CD4-positive, alpha-beta T cell (primary cell): ENCODE measurements at regions of chr9 and their contacts with region 1.

Region 1: DNA sequence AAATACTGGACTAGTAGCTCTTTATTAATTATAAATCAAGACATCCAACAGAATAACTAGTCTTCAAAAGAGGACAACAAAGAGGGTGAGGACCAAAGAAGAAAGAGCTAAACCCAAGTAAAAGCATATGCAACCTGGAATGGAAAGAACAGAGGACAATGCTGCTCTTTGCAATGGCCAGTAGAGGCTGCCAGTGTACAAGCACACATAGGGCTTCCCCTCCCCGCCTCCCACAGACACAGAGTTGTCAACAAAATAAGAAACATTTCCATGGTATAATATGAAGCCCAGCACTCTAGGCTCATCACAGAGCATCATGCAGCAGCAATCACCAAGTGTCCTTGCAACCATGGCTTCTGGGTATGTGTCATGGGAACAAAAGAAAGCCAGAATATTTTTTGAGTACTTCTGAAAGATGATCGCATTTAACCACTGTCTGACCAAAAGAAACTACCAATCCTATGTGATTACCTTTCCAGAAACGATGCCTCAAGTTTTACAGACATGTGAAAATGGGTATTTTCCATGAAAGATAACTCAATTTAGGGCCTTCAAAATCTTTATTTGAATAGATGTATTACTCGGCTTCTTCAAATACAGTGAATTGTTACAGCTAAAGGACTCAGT is 58.1 kb downstream of the RFX3 start:
- DNase-seq: peak; percentile 34 to 82 (median 53)
- ATAC-seq: peak; percentile 100
- H3K4me3 ChIP-seq: no peak overlapping the region
- H3K4me3 Mint-ChIP-seq: no peak overlapping the region
- H3K27ac ChIP-seq: no peak overlapping the region
- H3K27ac Mint-ChIP-seq: no peak overlapping the region
- H3K4me1 ChIP-seq: peaks cover 3% of the 10 kb centered on the region
- H3K4me1 Mint-ChIP-seq: peaks cover 6% of the 10 kb centered on the region
- H3K27me3 ChIP-seq: no peaks in the 10 kb centered on the region
- H3K27me3 Mint-ChIP-seq: no peaks in the 10 kb centered on the region
- CTCF ChIP-seq: peak; percentile 88

Region 2: DNA sequence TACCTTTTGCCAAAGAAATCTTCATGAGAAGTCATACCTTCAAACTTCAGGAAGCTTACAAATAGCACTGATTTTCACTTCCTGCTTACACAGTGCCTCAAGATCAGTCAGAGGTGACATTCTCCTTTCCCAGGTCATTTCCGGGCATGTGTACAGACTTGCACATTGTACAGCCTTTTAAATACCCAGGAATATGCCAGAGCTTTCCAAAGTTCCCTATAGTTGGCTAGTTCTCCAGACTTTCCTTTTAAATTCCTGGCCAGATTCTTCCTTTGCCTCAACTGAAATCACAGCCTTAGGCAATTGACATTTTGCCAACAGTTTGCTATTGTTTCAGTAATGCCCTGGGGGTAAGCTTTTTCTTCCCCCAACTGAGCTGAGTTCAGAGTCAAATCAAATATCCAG is 10.8 kb after region 1 on chr9:
- CTCF ChIA-PET with region 1: interaction called, 8 read pairs
- POLR2A ChIA-PET with region 1: interaction called, 12 read pairs
- intact Hi-C with region 1: no loop called
- DNase-seq: peak in 4 of 14 experiments; percentile 24 to 78 (median 52)
- ATAC-seq: peak; percentile 75
- H3K4me3 ChIP-seq: no peak overlapping the region
- H3K4me3 Mint-ChIP-seq: peak overlapping the region; percentile 85
- H3K27ac ChIP-seq: peak overlapping the region; percentile 14 to 63
- H3K27ac Mint-ChIP-seq: peak overlapping the region; percentile 88
- H3K4me1 ChIP-seq: peaks cover 10% of the 10 kb centered on the region
- H3K4me1 Mint-ChIP-seq: peaks cover 73% of the 10 kb centered on the region
- H3K27me3 ChIP-seq: no peaks in the 10 kb centered on the region
- H3K27me3 Mint-ChIP-seq: no peaks in the 10 kb centered on the region
- CTCF ChIP-seq: no peak

Region 3: DNA sequence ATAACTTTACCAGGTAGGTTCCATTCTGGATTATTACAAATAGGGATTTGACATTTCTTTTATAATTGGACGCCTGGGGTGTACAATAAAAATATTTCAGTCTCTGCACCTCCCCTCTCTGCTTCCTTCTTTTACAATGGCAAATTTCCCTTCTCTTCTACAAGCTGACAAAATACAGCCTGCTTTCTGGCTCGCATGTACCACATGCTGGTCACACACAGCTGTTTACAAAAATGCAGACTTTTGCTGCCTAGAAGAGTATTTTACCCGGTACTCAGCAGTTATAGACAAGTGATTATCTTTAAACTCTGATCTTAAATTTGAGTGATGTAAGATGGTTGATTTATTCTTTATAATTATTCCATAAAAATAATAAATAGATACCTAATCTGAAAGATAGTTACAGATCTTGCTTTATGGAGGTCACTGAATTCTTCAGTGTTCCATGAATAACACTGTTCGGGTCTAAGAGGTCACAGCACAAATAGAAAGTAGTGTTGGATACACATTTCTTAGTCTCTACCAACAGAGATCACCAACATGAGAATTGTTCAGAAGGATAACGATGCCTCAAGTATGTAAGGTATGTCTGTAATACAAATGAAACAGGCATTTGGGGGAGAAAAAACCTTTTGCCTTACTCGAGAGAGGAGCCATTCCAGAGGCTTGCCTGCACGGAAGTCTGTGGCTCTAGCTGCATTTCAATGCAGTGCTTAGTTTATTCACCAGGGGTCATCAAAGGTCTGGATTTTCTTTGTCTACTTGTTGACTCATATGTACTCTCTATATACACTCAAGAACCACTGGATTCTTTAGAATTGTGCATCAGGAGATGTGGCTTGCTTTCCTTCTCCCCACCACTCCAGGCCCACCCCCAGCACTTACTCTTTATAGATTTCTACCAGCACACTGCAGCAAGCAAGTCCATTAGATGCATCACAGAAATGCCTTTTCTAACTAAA is 264.7 kb after region 1 on chr9:
- CTCF ChIA-PET with region 1: no interaction called
- POLR2A ChIA-PET with region 1: no interaction called
- intact Hi-C with region 1: loop called in 1 of 2 experiments (anchors 5 kb)
- DNase-seq: peak in 6 of 14 experiments; percentile 1 to 66 (median 46)
- ATAC-seq: peak; percentile 91
- H3K4me3 ChIP-seq: no peak overlapping the region
- H3K4me3 Mint-ChIP-seq: no peak overlapping the region
- H3K27ac ChIP-seq: no peak overlapping the region
- H3K27ac Mint-ChIP-seq: no peak overlapping the region
- H3K4me1 ChIP-seq: peaks cover 4% of the 10 kb centered on the region
- H3K4me1 Mint-ChIP-seq: peaks cover 5% of the 10 kb centered on the region
- H3K27me3 ChIP-seq: no peaks in the 10 kb centered on the region
- H3K27me3 Mint-ChIP-seq: no peaks in the 10 kb centered on the region
- CTCF ChIP-seq: peak; percentile 43

Region 4: DNA sequence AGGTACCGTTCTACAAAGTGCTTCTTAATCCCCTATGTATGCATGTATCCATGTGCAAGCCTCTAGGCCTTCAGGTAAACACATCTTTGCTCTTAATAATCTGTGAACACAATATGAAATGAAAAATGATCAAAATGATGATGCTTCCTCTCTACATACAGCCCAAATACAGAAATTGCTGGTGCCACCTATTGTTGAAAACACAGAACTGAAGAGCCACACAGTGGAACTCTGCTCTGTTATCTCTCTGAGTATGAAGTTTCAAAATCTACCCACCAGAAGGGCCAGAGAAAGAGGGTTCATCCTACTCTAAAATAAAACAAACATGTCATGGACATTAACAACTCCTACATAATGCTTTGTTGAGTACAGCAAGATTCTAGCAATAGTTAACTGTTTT is 760.9 kb after region 1 on chr9:
- CTCF ChIA-PET with region 1: no interaction called
- POLR2A ChIA-PET with region 1: no interaction called
- intact Hi-C with region 1: loop called in 1 of 2 experiments (anchors 10 kb)
- DNase-seq: no peak
- ATAC-seq: no peak
- H3K4me3 ChIP-seq: no peak overlapping the region
- H3K4me3 Mint-ChIP-seq: no peak overlapping the region
- H3K27ac ChIP-seq: no peak overlapping the region
- H3K27ac Mint-ChIP-seq: no peak overlapping the region
- H3K4me1 ChIP-seq: no peaks in the 10 kb centered on the region
- H3K4me1 Mint-ChIP-seq: peaks cover 4% of the 10 kb centered on the region
- H3K27me3 ChIP-seq: no peaks in the 10 kb centered on the region
- H3K27me3 Mint-ChIP-seq: peaks cover 14% of the 10 kb centered on the region
- CTCF ChIP-seq: no peak

Region 5: GRCh38 chr9:4344946-4345345 is 877.2 kb after region 1 on chr9:
- CTCF ChIA-PET with region 1: no interaction called
- POLR2A ChIA-PET with region 1: no interaction called
- intact Hi-C with region 1: loop called in 1 of 2 experiments (anchors 10 kb)
- DNase-seq: peak in 6 of 14 experiments; percentile 6 to 42 (median 24)
- ATAC-seq: peak; percentile 64
- H3K4me3 ChIP-seq: no peak overlapping the region
- H3K4me3 Mint-ChIP-seq: no peak overlapping the region
- H3K27ac ChIP-seq: no peak overlapping the region
- H3K27ac Mint-ChIP-seq: no peak overlapping the region
- H3K4me1 ChIP-seq: peaks cover 6% of the 10 kb centered on the region
- H3K4me1 Mint-ChIP-seq: no peaks in the 10 kb centered on the region
- H3K27me3 ChIP-seq: no peaks in the 10 kb centered on the region
- H3K27me3 Mint-ChIP-seq: no peaks in the 10 kb centered on the region
- CTCF ChIP-seq: no peak